HEK293T (cell line): ENCODE measurements at regions of chr3 and their contacts with region 1.

Region 1: DNA sequence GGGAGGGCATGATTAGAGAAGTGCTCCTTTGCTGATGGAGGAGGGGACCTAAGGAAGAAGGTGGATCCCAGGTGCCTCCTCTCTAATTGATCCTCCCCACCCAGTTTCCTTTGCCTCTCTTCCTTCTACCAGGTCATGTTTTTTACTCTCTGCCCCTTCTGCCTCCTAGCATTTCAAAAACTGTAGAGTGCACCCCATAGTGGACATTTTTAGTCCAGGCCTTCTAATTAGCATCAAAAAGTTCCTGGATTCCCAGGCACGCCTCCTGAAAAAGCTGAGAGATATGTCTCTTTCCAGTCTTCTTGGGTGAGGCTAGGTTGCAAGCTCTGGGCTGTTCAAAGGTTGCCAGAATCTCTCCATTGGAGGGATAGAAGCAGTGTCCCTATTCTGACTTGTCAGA is 18.7 kb upstream of the ITGB5 start:
- DNase-seq: no peak

Region 2: DNA sequence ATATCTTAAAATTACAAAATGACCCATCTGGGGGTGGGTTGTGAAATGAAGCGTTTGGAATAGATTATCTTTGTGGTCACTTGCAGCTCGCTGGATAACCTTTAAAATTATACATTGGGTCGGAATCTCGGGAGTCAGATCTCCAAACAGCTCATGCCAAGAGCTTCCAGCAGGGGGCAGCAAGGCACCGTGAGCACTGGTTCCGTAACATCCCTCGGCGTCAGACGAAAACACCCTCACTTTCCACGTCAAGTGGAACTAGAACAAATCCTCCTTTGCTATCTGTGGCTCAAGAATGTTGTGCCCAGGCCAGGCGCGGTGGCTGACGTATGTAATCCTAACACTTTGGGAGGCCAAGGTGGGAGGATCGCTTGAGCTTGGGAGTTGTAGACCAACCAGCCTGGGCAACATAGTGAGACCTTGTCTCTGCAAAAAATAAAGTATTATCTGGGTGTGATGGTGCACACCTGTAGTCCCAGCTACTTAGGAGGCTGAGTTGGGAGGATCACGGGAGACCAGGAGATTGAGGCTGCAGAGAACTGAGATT is 144.5 kb before region 1 on chr3:
- CTCF ChIA-PET with region 1: interaction called, 15 read pairs
- POLR2A ChIA-PET with region 1: interaction called, 3 read pairs
- DNase-seq: peak; percentile 75

Region 3: GRCh38 chr3:124786441-124787241 is 119.2 kb before region 1 on chr3:
- CTCF ChIA-PET with region 1: interaction called, 17 read pairs
- POLR2A ChIA-PET with region 1: interaction called, 3 read pairs
- DNase-seq: no peak

Region 4: DNA sequence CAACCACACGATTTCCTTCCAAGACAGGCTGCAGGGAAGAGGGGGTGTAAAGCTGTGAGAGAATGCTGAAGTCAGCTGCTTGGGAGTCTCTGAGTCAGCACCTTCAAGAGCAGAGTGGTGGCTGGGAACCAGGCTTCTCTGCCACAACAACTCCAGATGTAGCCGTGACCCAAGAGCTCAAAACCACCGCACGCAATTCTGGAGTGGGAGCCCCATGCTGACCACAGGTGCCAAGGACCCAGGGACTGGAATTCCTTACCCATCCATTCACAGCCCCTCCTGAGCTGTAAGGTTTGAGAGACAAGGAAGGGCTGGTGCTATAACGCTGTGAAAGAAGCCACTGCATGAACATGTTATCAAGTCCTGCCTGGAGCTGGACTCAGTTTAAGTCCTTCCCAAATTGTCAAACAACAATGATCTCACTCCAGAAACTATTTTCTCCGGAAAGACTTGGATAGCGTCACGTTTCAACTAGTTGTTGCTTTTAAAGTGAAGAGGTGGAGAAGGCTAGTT is 114.2 kb before region 1 on chr3:
- CTCF ChIA-PET with region 1: interaction called, 17 read pairs
- POLR2A ChIA-PET with region 1: interaction called, 3 read pairs
- DNase-seq: no peak

Region 5: DNA sequence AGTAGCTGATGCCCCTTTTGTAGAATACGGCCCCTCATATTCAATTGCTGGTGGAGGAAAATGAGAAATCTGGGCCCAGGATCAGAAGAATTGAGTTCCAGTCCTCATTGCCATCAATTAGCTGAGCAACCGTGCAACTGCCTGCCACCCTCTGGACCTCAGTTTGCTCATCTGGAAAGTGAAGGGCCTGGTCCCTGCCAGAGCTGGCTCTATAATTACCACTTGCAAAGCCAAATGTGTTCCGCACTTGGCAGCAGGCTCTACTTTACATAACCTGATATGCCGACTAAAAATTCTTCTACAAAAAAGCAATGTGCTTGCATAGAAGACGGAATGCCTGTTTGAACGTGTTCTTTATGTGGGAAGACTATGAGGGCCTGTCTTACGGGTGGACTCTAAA is 10.1 kb before region 1 on chr3:
- CTCF ChIA-PET with region 1: no interaction called
- POLR2A ChIA-PET with region 1: no interaction called
- DNase-seq: no peak

Region 6: DNA sequence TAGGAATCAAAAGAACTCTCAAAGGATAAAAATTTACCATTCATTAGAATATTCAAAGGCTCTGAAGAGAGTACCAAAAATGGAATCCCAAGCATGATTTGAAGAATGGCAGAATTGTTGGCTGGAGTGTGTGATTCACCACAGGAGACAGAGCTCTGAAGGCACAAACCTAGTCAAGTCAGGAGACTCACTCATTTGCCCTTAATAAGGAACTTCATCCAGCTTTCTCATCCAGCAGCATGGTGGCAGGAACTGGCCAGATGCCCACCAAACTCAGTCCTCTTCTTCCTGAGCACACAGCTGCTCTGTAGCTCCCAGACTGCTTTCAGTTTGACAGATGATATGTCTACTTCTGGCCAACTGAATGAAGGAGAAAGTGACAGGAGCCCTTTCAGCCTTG is 166.5 kb after region 1 on chr3:
- CTCF ChIA-PET with region 1: no interaction called
- POLR2A ChIA-PET with region 1: no interaction called
- DNase-seq: no peak